Gastrocnemius medialis (tissue), 4 donors: ENCODE measurements at regions of chr21 and their contacts with region 1.

Region 1: DNA sequence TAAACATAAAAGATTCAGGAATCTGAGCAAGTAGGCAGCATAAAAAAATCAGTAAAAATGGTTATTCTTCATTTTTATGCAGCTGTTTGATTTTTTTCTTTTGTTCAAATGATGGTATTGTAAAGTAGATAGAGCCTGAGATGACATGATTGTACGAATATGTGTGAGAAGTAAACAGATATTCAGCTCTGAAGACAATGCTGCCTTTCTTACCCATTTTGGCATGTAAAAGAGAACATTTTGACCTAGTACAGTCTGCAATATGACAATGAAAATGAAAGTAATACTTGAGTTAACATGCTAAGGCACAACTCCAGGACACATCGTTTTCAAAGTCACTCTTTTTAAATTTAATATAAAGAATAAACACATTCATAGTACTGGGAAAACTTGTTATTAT is 95.7 kb upstream of the NCAM2 start:
- DNase-seq: no peak
- ATAC-seq: peak in 1 of 2 donors; percentile 65
- H3K4me3 ChIP-seq: no peak overlapping the region
- H3K27ac ChIP-seq: no peak overlapping the region
- H3K4me1 ChIP-seq: no peaks in the 10 kb centered on the region
- H3K27me3 ChIP-seq: no peaks in the 10 kb centered on the region
- CTCF ChIP-seq: no peak
- POLR2A ChIP-seq: no peak

Region 2: DNA sequence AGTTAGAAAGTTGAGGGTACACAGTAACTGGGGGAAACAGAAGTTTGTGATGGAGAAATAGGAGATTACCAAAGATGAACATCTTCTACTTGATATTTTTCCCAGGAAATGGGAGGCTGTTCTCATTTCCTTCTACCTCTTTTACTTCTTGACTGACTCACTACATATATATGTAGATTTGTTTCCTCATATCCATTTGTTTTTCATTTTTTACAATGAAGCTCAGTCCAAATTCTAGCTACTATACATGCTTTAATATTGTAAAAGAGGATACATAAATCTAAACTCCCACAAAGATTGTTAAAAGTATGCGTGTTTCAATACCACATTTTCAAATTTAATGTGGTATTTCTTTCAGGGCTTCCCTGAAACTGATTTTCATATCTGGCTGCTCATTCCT is 270.9 kb before region 1 on chr21:
- in situ Hi-C with region 1: no loop called
- intact Hi-C with region 1: no loop called
- DNase-seq: no peak
- ATAC-seq: no peak
- H3K4me3 ChIP-seq: no peak overlapping the region
- H3K27ac ChIP-seq: no peak overlapping the region
- H3K4me1 ChIP-seq: no peaks in the 10 kb centered on the region
- H3K27me3 ChIP-seq: no peaks in the 10 kb centered on the region
- CTCF ChIP-seq: no peak
- POLR2A ChIP-seq: no peak

Region 3: DNA sequence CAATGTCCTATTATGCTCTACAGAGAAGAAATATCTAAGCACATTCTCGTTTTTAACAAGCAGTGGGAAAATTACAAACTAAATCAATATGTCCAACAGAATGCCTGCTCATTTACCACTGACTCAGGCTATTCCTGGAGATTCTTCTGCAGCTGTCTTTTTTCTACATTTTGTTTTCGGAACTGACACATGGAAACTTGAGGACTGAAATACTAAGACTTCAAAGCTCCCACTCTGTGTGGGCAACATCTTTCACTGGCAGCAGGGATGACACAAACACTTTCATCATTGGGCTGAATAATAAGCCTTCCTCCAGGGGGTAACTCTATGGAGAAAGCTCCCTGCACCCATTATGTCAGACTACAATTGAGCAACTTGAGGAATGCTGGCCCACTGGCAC is 79.8 kb before region 1 on chr21:
- in situ Hi-C with region 1: loop called in 1 of 4 experiments (anchors 25 kb)
- intact Hi-C with region 1: no loop called
- DNase-seq: no peak
- ATAC-seq: no peak
- H3K4me3 ChIP-seq: no peak overlapping the region
- H3K27ac ChIP-seq: no peak overlapping the region
- H3K4me1 ChIP-seq: no peaks in the 10 kb centered on the region
- H3K27me3 ChIP-seq: no peaks in the 10 kb centered on the region
- CTCF ChIP-seq: no peak
- POLR2A ChIP-seq: no peak

Region 4: DNA sequence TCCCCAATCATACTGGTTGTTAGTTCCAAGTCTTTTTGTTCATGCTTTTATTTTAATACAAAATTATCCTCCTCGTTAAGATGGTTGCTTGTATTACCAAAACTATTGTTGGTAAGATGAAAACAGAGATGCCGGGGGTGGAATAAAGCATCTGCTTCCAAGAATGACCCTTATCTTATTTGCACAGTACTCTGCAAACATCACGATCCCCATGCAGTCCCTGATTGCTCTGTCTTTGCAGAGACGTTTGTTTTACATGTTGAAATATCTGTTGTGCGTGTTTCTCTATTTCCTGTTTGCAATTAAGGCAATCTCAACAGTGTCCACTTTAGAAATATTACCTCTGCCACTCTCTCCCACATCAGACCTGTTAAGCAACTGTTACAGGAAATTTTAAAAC is 45.6 kb before region 1 on chr21:
- in situ Hi-C with region 1: no loop called
- intact Hi-C with region 1: no loop called
- DNase-seq: no peak
- ATAC-seq: no peak
- H3K4me3 ChIP-seq: no peak overlapping the region
- H3K27ac ChIP-seq: no peak overlapping the region
- H3K4me1 ChIP-seq: no peaks in the 10 kb centered on the region
- H3K27me3 ChIP-seq: no peaks in the 10 kb centered on the region
- CTCF ChIP-seq: no peak
- POLR2A ChIP-seq: no peak